Left colon (tissue), 2 donors: ENCODE measurements at regions of chr21 and their contacts with region 1.

Region 1: DNA sequence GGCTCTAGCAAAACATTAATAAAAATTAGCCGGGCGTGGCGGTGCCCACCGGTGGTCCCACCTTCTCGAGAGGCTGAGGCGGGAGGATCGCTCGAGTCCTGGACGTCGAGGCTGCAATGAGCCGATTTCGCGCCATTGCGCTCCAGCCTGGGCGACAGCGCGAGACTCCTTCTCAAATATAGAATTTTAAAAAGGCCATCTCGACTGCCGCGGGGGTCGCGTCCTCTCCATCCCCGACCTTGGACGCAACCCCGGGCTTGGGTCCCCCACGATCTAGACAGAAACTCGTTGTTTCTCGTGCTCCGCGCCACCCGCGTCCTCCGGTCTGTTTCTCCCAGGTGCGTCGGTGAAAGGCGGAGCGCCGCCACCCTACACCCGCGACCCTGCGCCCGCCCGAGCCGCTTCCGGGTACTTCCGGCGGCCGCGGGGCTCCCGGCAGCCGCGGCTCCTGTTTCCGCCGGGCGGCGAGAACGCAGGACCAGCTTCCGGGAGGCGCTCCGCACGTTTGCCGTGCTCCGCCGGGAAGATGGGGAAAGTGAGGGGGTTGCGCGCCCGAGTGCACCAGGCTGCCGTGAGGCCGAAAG is at the start of gene SLX9:
- DNase-seq: peak; percentile 67 to 85
- ATAC-seq: peak; percentile 84
- total RNA-seq, gene SLX9: 22.3 to 30.5 TPM

Region 2: DNA sequence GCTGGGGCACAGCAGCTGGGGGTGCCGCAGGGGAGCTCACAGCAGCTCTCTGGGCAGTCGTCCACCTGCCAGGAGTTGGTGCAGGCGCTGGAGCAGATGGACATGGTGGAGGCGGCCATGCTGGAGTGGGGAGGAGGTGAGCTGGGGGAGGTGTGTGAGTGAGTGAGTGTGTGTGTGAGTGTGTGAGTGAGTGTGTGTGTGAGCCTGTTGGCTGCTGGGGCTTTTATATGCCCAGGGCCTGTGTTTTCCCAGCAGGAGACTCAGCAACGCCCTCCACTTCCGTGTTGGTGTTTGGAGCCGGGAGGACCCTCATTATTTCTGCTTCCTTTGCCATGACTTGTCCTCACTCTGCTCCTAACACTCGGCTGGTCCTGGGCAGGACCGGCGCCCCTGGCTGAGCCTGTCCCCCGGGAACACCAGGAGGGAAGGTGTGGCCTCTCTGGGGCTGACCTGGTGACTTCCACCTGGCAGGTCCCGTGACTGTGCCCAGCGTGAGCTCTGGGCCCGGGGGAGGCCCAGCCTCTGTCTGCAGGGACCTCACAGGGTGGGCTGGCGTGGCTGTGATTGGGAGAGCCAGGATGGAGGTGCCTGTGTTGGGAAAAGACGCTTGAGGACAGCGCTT is 388.2 kb before region 1 on chr21 and contains the start of gene KRTAP10-2:
- intact Hi-C with region 1: no loop called
- DNase-seq: peak in 1 of 2 donors; percentile 12
- ATAC-seq: peak; percentile 60
- total RNA-seq, gene KRTAP10-2: not detected

Region 3: GRCh38 chr21:44801468-44802395 is 137.9 kb before region 1 on chr21 and contains the start of gene UBE2G2:
- intact Hi-C with region 1: loop called in 1 of 2 experiments (anchors 10 kb)
- DNase-seq: peak; percentile 68 to 85
- ATAC-seq: peak; percentile 92
- total RNA-seq, gene UBE2G2: 56.7 to 79.4 TPM

Region 4: DNA sequence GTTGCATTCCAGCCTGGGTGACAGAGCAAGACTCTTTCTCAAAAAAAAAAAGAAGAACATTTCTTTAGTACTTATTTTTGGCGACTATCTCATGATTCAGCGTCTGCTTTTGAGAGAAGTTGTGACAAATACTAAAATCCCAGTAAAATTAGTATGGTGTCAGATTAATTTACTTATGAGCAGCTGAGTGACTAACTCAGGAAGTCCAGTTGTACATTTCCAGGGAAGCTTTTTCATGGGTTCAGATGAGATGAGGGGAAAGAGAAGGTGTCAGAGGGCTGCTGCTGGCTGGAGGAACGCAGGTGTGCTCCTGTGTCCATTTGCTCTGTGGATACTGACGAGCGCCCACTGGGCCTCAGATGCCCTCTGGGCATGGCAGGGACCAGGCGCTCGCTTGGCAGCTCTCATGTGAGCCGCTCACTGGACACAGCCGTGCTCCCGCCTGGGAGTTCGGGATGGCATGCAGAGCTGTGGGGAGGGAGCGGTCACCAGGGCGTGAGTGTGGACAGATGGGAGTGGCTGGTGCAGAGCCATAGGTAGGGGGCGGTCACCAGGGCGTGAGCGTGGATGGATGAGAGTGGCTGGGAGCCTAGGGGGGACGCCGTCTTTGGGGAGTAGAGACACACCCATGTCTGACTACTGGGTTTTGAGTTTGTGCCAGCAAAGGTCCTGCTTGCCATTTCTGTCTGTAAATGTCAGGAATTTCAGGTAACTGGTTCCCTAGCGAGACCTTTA is 189.7 kb after region 1 on chr21:
- intact Hi-C with region 1: loop called in 1 of 2 experiments (anchors 2 kb)
- DNase-seq: no peak
- ATAC-seq: peak; percentile 64